CD4-positive, alpha-beta T cell (primary cell): ENCODE measurements at regions of chr1 and their contacts with region 1.

Region 1: DNA sequence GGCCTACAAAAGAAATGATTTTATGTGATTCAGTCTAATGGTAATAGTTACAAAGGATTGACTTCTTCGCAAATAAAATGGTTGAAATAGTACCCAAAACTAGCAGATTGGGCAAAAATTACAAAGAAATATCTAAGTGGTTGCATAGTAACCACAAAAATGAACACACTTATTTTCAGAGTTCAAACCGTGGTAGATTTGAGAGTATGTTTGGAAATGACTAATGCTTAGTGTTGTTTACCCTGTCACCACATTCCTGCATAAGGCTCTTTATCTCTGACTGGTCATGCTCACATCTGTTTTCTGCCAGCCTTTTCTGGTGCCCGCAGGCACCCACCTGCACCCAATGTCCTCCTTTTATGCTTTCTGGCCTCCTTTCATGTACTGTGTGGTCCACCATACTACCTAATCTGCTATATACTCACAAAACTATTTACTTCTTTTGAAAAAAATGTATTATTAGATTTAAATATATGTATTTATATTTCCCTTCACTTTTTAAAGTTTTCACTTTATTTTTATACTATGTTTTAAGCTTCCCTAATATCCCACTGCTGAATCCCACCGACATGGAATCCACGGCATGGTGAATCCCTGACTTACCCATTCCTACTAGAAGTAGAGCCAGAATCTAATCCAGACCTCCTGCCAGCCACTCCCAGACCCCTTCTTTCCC is 30.3 kb downstream of the PTPRC start:
- DNase-seq: peak in 6 of 14 experiments; percentile 29 to 83 (median 66)
- ATAC-seq: peak; percentile 72
- H3K4me3 ChIP-seq: no peak overlapping the region
- H3K4me3 Mint-ChIP-seq: peak overlapping the region; percentile 72
- H3K27ac ChIP-seq: peak overlapping the region; percentile 61 to 66
- H3K27ac Mint-ChIP-seq: peak overlapping the region; percentile 100
- H3K4me1 ChIP-seq: peaks cover 52% of the 10 kb centered on the region
- H3K4me1 Mint-ChIP-seq: peaks cover 98% of the 10 kb centered on the region
- H3K27me3 ChIP-seq: no peaks in the 10 kb centered on the region
- H3K27me3 Mint-ChIP-seq: no peaks in the 10 kb centered on the region
- CTCF ChIP-seq: no peak

Region 2: DNA sequence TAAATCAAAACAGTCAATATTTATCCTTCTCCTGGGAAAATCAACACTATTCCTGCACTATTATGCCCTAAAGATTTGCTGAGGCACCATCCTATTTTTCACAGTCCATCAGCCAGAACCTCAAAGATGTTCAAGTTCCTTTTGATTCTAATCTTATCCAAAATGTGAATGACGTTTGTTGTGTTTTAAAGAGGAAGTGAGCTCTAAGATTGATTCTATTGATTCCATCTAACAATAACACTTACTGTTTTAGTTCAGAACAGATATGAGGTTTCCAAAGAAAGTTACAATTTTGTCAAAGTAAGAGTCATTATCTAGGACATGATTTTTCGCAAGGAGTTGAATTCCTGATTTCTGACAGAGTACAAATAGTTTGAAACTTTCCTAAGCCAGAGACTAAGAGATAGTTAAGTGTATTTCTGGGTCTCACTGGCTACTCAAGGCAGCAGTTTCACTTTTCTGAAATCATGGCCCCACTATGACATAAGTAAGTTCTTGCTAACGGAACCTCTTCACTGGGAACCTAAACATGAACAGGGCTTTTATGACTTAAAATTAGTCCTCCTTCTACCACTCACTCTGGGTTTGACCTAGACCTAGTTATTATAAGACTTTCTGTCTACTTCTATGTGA is 667.3 kb before region 1 on chr1:
- CTCF ChIA-PET with region 1: no interaction called
- POLR2A ChIA-PET with region 1: no interaction called
- intact Hi-C with region 1: no loop called
- DNase-seq: no peak
- ATAC-seq: no peak
- H3K4me3 ChIP-seq: no peak overlapping the region
- H3K4me3 Mint-ChIP-seq: no peak overlapping the region
- H3K27ac ChIP-seq: no peak overlapping the region
- H3K27ac Mint-ChIP-seq: no peak overlapping the region
- H3K4me1 ChIP-seq: no peaks in the 10 kb centered on the region
- H3K4me1 Mint-ChIP-seq: no peaks in the 10 kb centered on the region
- H3K27me3 ChIP-seq: no peaks in the 10 kb centered on the region
- H3K27me3 Mint-ChIP-seq: no peaks in the 10 kb centered on the region
- CTCF ChIP-seq: no peak

Region 3: DNA sequence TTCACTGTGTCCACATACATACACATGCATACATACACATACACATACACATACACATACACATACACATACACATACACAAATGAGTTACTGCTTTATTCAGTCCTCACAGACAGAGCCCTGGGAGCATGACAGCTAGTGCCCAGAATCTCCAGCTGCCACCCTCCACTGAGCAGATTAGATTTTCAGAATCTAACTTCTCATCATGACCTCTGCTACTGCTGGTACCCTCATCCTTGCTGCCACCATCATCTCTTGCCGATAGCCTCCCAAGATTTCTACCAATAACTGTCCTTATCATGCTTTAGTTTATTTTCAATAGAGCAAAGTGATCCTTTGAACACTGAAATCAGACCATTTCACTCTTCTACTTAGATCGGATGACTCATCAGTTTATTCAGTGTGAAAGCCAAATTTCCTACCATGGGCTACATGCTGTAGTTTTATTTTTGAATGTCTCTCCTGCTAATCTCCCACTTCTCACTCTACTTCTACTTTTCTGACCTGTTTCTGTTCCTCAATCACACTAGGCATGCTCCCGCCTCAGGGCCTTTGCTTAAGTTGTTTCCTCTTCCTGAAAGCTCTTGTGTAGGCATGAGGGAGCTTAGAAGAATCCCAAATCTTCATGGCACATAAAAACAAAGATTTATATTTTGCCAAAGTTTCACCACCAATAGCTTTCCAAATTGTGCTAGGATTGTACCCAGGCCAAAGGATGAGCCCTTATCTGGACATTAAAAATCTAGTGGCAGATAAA is 171.6 kb before region 1 on chr1:
- CTCF ChIA-PET with region 1: no interaction called
- POLR2A ChIA-PET with region 1: no interaction called
- intact Hi-C with region 1: no loop called
- DNase-seq: peak in 3 of 14 experiments; percentile 9 to 21 (median 19)
- ATAC-seq: no peak
- H3K4me3 ChIP-seq: no peak overlapping the region
- H3K4me3 Mint-ChIP-seq: no peak overlapping the region
- H3K27ac ChIP-seq: no peak overlapping the region
- H3K27ac Mint-ChIP-seq: no peak overlapping the region
- H3K4me1 ChIP-seq: no peaks in the 10 kb centered on the region
- H3K4me1 Mint-ChIP-seq: no peaks in the 10 kb centered on the region
- H3K27me3 ChIP-seq: no peaks in the 10 kb centered on the region
- H3K27me3 Mint-ChIP-seq: no peaks in the 10 kb centered on the region
- CTCF ChIP-seq: no peak

Region 4: DNA sequence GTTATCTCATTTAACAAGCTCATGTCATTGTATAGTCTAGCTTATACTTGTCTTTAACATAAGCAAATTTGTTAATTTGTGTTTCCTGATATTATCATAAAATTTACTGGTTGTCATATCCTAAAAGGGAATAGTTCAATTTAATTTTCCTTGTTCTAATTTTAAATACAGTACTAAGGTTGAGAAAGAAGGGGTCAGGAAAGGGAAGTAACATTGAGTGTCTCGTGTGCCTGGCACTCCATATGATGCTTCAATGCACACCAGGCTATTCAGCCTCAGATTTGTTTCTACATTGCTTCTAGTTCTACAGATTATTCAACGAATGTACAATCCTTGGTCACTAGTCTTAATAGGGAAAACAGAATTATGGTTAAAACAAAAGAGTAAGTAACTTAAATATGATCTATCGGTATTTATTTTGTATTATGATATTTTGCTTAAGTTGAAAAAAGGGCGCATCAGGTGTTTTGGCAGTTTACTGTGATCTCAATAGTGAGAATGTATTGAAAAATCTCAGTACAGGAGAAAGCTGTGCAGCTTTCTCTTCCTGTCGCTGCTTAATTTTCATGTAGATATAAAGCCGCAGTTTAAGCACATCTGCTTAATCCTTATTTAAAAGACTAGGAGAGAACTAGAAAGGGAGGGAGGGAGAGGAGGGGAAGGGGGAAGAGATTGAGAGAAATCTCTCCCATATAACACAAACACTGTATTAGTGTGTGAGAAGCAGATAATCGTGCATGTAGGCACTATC is 17.3 kb before region 1 on chr1:
- CTCF ChIA-PET with region 1: interaction called, 4 read pairs
- POLR2A ChIA-PET with region 1: interaction called, 317 read pairs
- intact Hi-C with region 1: no loop called
- DNase-seq: peak in 1 of 14 experiments; percentile 46
- ATAC-seq: no peak
- H3K4me3 ChIP-seq: peak overlapping the region; percentile 79
- H3K4me3 Mint-ChIP-seq: peak overlapping the region; percentile 83
- H3K27ac ChIP-seq: peak overlapping the region; percentile 81 to 85
- H3K27ac Mint-ChIP-seq: peak overlapping the region; percentile 90
- H3K4me1 ChIP-seq: peaks cover 24% of the 10 kb centered on the region
- H3K4me1 Mint-ChIP-seq: peaks cover 76% of the 10 kb centered on the region
- H3K27me3 ChIP-seq: no peaks in the 10 kb centered on the region
- H3K27me3 Mint-ChIP-seq: no peaks in the 10 kb centered on the region
- CTCF ChIP-seq: no peak